Heart right ventricle (tissue), 16 donors: ENCODE measurements at regions of chr3 and their contacts with region 1.

Region 1: DNA sequence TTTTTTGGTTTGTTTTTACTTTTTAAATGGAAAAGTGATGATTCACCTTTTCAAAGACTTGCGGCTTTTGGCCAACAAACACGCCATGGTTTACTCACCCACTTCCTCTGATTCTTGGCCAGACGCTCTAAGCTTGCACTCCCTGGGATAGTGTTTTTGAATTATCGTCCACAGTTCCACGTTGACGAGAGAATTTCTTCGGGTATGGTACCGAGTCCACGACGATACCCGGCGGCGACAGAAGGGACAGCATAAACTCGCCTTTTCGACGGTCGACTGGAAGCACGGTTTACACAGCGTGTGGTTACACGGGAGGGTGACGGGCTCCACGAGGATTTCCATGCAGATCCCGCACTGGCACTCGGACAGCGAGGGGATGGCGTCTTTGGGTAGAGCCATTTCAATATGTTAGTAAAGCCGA is 783 bp downstream of the RNF168 start:
- DNase-seq: peak; percentile 39 to 68
- ATAC-seq: peak; percentile 45 to 74 (median 58)
- H3K4me3 ChIP-seq: peak overlapping the region; percentile 66 to 100 (median 92)
- H3K27ac ChIP-seq: peak overlapping the region; percentile 72 to 99 (median 97)
- H3K4me1 ChIP-seq: peaks cover 0 to 46% (median 31%) of the 10 kb centered on the region in 9 donors
- H3K27me3 ChIP-seq: no peaks in the 10 kb centered on the region
- CTCF ChIP-seq: no peak

Region 2: DNA sequence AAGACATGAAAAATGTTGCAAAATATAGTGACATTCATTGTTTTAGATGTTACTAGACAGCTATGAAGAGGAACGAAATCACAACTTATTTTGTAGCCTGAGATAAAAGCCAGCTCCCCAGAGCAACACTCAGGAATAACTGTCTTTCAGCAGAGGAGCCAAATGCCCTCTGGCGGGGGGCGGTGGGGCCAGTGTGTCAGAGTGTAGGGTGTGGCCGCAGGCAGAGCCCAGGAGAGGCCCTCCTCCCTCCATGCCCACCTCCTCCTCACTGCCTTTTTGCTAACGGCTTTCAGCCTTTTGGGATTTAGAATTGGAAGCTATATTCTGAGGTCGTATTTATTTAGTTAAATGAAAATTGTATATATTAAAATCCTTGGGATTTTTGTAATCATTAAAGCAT is 936.0 kb before region 1 on chr3:
- intact Hi-C with region 1: loop called in 1 of 10 experiments (anchors 5 kb)
- DNase-seq: no peak
- ATAC-seq: no peak
- H3K4me3 ChIP-seq: no peak overlapping the region
- H3K27ac ChIP-seq: no peak overlapping the region
- H3K4me1 ChIP-seq: peaks cover 0 to 20% (median 18%) of the 10 kb centered on the region in 9 donors
- H3K27me3 ChIP-seq: peaks cover 0 to 13% (median 0%) of the 10 kb centered on the region in 7 donors
- CTCF ChIP-seq: no peak

Region 3: GRCh38 chr3:196081791-196082618 is 420.8 kb before region 1 on chr3 and contains the start of gene TFRC:
- intact Hi-C with region 1: loop called in 1 of 10 experiments (anchors 5 kb)
- DNase-seq: peak; percentile 94 to 96
- ATAC-seq: peak; percentile 98 to 99 (median 99)
- H3K4me3 ChIP-seq: peak within 1 kb of the TSS; percentile 86 to 100 (median 94)
- H3K27ac ChIP-seq: peak within 1 kb of the TSS; percentile 76 to 99 (median 96)
- H3K4me1 ChIP-seq: peaks cover 0 to 40% (median 32%) of the 10 kb centered on the region in 9 donors
- H3K27me3 ChIP-seq: no peaks in the 10 kb centered on the region
- CTCF ChIP-seq: peak in 1 of 9 donors; percentile 14
- total RNA-seq, gene TFRC: 58.8 to 300 (median 104) TPM

Region 4: GRCh38 chr3:196287440-196288148 is 215.2 kb before region 1 on chr3 and contains the start of gene PCYT1A:
- intact Hi-C with region 1: loop called in 1 of 10 experiments (anchors 1 kb)
- DNase-seq: peak; percentile 87 to 94
- ATAC-seq: peak; percentile 96 to 99 (median 98)
- H3K4me3 ChIP-seq: peak within 1 kb of the TSS; percentile 64 to 96 (median 84)
- H3K27ac ChIP-seq: peak within 1 kb of the TSS; percentile 85 to 99 (median 96)
- H3K4me1 ChIP-seq: peaks cover 2 to 51% (median 48%) of the 10 kb centered on the region in 9 donors
- H3K27me3 ChIP-seq: no peaks in the 10 kb centered on the region
- CTCF ChIP-seq: no peak
- total RNA-seq, gene PCYT1A: 93.8 to 121 (median 106) TPM

Region 5: DNA sequence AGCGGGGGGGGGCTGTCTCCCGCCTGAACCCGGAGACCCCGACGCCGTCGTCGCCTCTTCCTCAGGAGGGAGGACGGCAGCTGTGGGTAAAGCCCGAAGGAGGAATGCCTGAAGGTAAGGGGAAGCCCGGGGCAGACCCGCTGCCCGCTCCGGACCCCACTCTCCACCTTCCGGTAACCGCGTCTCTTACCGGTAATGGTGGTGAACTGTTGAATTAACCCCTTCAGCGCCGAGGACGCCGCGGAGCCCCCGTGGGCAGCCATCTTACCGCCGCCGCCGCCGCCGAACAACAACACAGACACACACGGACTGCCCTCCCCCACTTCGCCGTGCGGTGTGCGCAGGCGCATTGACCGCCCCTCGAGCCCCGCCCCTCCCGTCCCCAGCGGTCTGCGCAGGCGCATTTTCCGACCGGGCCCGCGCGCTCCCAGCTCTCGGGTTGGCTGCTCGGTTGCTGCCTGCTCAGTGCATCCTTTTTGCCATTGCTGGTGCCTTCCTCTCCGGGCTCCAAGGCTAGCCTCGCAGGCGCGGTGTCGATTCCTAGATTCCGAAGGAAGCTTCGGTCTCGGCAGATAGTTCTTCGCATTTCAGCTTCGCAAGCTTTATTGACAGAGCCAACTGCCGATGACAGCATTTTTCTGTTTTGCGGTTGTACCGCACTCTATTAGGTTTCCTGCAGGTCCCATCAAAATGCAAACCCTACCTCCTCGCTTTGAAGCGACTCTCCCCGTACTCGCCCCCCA is 70.5 kb before region 1 on chr3 and contains the start of gene UBXN7:
- intact Hi-C with region 1: loop called in 2 of 10 experiments (anchors 5 kb)
- DNase-seq: peak; percentile 95 to 98
- ATAC-seq: peak; percentile 97 to 99 (median 98)
- H3K4me3 ChIP-seq: peak within 1 kb of the TSS; percentile 71 to 100 (median 96)
- H3K27ac ChIP-seq: peak within 1 kb of the TSS; percentile 80 to 99 (median 94)
- H3K4me1 ChIP-seq: peaks cover 0 to 44% (median 24%) of the 10 kb centered on the region in 9 donors
- H3K27me3 ChIP-seq: no peaks in the 10 kb centered on the region
- CTCF ChIP-seq: no peak
- total RNA-seq, gene UBXN7: 25.2 to 41.7 (median 32.5) TPM

Region 6: GRCh38 chr3:196454935-196455334 is 47.9 kb before region 1 on chr3:
- intact Hi-C with region 1: no loop called
- DNase-seq: no peak
- ATAC-seq: peak in 3 of 8 donors; percentile 27 to 58 (median 56)
- H3K4me3 ChIP-seq: no peak overlapping the region
- H3K27ac ChIP-seq: no peak overlapping the region
- H3K4me1 ChIP-seq: peaks cover 0 to 7% (median 0%) of the 10 kb centered on the region in 9 donors
- H3K27me3 ChIP-seq: no peaks in the 10 kb centered on the region
- CTCF ChIP-seq: no peak